ENCODE measurements at regions of chr15 and their contacts with region 1.

Region 1: DNA sequence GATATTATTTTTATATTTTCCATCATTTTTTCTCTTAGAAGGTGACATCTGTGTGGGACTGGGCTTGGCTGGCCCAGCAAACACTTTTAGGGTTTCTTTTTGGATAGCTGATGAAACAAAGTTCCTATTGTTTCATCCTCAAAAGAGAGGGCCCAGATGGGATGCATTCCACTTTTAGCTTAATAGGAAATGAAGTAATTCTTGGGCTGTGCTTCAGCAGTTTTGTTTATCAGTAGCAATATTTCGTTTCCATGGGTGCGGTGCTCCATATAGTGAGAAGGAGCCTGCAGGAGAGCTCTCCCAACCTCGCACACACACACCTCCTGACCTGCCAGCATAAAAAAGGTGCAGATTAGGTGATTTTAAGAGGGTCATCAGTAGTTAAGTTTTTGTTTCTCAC is 147.5 kb downstream of the AKAP13 start:
- DNase-seq: no peak
- H3K4me3 ChIP-seq: no peak overlapping the region
- H3K27ac ChIP-seq: no peak overlapping the region
- H3K4me1 ChIP-seq: no peaks in the 10 kb centered on the region
- H3K27me3 ChIP-seq: no peaks in the 10 kb centered on the region
- CTCF ChIP-seq: no peak

Region 2: DNA sequence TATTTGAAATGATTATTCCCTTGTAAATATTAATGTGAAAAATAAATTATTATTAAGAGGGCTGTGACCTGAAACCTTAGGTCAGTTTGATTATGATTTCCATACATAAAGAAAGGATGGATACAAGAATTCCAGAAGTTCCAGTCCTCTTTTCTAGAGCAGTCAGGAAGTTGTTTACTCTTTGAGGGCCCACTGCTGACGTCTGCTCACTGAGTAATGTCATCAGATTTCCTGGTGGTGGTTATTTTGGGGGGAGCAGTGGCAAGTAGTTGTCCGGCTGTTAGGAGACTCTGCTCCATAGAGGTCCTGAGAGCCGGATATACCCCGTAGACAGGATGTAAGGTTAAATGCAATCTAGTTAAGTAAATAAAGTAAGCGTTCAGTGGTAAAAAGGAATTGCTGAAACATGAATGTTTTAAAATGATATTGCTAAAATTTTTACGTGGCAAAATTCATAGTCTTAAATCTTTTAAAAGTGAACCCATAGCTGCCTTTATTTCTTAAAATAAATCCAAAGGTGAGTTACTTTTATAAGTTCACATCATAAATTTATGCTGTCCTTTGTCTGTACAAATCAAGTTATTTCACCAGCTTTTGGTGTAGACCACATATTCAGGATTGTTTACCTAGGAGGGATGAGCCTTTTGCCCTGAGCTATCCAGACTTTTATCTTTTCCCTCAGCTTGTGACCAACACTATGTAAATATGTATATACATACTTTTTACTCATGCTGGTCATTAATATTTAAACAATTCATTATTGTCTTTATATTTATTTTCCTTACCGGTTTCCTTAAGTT is 480.5 kb before region 1 on chr15:
- CTCF ChIA-PET with region 1: no interaction called
- POLR2A ChIA-PET with region 1: no interaction called
- intact Hi-C with region 1: no loop called
- DNase-seq: peak; percentile 37 to 82
- H3K4me3 ChIP-seq: peak overlapping the region; percentile 31
- H3K27ac ChIP-seq: peak overlapping the region; percentile 85
- H3K4me1 ChIP-seq: peaks cover 44% of the 10 kb centered on the region
- H3K27me3 ChIP-seq: no peaks in the 10 kb centered on the region
- CTCF ChIP-seq: no peak

Region 3: DNA sequence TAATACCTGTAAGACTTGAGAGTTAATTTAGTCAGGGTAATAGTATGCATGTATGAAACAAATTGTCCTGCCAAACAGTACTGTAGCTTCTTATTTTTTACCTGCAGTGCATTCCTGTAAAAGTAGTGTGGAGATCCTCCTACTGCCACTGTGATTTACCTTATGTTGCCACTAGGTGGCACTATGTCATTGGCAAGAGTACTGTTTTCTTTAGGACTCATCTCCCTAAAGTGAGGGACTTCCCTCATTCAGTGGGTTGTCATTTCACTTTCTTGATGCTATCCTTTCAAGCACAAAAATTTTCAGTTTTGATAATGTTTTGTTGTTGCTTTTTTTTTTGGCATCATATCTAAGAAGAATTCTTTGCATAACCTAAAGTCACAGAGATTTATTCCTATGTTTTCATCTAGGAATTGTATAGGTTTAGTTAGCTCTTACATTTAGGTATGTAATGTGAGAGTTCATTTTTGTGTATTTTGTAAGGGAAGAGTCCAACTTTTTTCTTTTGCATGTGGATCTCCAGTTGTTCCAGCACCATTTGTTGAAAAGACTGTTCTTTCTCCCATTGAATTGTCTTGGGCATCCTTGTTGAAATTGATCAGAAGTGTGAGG is 41.8 kb before region 1 on chr15:
- CTCF ChIA-PET with region 1: no interaction called
- POLR2A ChIA-PET with region 1: no interaction called
- intact Hi-C with region 1: no loop called
- DNase-seq: peak; percentile 55 to 56
- H3K4me3 ChIP-seq: no peak overlapping the region
- H3K27ac ChIP-seq: no peak overlapping the region
- H3K4me1 ChIP-seq: 0 out of 2 replicates have a peak, but pooled peaks cover 11% of the 10 kb centered on the region
- H3K27me3 ChIP-seq: no peaks in the 10 kb centered on the region
- CTCF ChIP-seq: peak; percentile 87

Region 4: GRCh38 chr15:85618956-85619491 is 91.1 kb after region 1 on chr15:
- CTCF ChIA-PET with region 1: interaction called, 16 read pairs
- POLR2A ChIA-PET with region 1: no interaction called
- intact Hi-C with region 1: no loop called
- DNase-seq: peak in 1 of 2 experiments; percentile 44
- H3K4me3 ChIP-seq: no peak overlapping the region
- H3K27ac ChIP-seq: no peak overlapping the region
- H3K4me1 ChIP-seq: no peaks in the 10 kb centered on the region
- H3K27me3 ChIP-seq: no peaks in the 10 kb centered on the region
- CTCF ChIP-seq: no peak

Region 5: GRCh38 chr15:85630311-85630710 is 102.4 kb after region 1 on chr15:
- CTCF ChIA-PET with region 1: no interaction called
- POLR2A ChIA-PET with region 1: no interaction called
- intact Hi-C with region 1: no loop called
- DNase-seq: no peak
- H3K4me3 ChIP-seq: no peak overlapping the region
- H3K27ac ChIP-seq: no peak overlapping the region
- H3K4me1 ChIP-seq: no peaks in the 10 kb centered on the region
- H3K27me3 ChIP-seq: no peaks in the 10 kb centered on the region
- CTCF ChIP-seq: no peak

Region 6: DNA sequence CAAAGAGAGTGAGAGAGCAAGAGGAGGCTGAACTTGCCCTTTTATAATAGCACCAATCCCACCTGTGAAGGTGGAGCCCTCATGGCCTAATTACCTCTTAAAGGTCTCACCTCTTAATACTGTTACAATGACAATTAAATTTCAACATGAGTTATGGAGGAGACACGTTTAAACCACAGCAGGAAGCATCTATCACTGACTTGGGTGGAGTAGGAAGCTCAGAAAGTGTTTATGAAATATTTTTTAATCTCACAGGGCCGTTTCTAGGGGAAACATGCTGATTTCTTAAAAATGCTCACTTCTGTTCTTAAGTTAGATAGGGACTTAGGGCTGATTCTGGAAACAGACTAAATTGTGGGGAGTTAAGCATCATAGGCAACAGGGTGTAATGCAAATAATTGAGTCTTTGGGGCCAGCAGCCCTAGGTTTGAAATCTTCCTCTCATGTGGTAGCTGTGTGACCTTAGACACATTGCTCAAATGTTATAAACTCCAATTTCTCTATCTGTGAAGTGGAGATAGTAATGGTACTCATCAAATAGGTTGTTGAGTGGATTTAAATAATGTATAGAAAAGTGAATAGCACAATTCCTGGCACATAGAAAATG is 400.1 kb after region 1 on chr15:
- CTCF ChIA-PET with region 1: no interaction called
- POLR2A ChIA-PET with region 1: no interaction called
- intact Hi-C with region 1: no loop called
- DNase-seq: no peak
- H3K4me3 ChIP-seq: no peak overlapping the region
- H3K27ac ChIP-seq: no peak overlapping the region
- H3K4me1 ChIP-seq: no peaks in the 10 kb centered on the region
- H3K27me3 ChIP-seq: peaks cover 15% of the 10 kb centered on the region
- CTCF ChIP-seq: no peak

Measured in PC-9 (cell line).